HepG2 (cell line): ENCODE measurements at regions of chr1 and their contacts with region 1.

Region 1: GRCh38 chr1:109762821-109763645 is 690 bp downstream of the EPS8L3 start:
- DNase-seq: no peak
- ATAC-seq: peak; percentile 2; the same call in 2 of the 3 replicates
- H3K4me3 ChIP-seq: peak overlapping the region; percentile 76 to 88 (median 79)
- H3K27ac ChIP-seq: peak overlapping the region; percentile 74
- H3K4me1 ChIP-seq: peaks cover 80% of the 10 kb centered on the region
- H3K27me3 ChIP-seq: no peaks in the 10 kb centered on the region; a peak in 2 of 5 replicates
- CTCF ChIP-seq: no peak
- EP300 ChIP-seq: no peak
- POLR2A ChIP-seq: no peak
- RAD21 ChIP-seq: no peak

Region 2: DNA sequence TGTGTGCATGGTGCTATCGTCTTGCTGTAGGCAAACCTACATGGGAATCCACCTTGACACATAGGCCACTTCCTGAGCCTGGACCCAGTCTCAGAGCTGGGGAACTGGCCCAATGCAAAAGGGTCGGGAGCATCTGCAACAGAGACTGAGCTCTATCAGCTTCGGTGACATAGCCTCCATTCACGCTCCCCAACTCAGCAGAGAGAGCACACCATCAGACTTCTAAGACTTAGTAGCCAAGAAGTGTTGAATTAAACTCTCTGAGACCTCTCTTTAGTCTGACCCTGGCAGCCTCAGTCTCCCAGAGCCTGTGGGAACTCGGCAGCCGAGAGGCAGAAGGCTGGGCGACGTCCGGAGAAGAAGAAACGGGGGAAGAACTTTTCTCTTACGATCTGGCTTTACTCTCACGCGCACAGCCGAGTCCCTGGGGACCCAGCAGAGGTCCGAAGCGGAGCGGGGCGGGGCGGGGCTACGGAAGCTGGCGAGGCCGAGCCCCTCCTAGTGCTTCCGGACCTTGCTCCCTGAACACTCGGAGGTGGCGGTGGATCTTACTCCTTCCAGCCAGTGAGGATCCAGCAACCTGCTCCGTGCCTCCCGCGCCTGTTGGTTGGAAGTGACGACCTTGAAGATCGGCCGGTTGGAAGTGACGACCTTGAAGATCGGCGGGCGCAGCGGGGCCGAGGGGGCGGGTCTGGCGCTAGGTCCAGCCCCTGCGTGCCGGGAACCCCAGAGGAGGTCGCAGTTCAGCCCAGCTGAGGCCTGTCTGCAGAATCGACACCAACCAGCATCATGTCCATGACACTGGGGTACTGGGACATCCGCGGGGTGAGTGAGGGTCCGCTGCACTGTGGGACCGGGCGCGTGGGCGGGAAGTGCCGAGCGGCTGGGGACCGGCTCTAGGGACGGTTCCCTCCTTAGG is 107.2 kb before region 1 on chr1 and contains the start of gene GSTM4:
- CTCF ChIA-PET with region 1: no interaction called
- POLR2A ChIA-PET with region 1: interaction called, 11 read pairs
- in situ Hi-C with region 1: no loop called
- intact Hi-C with region 1: no loop called
- DNase-seq: peak; percentile 59
- ATAC-seq: peak; percentile 97
- H3K4me3 ChIP-seq: peak within 1 kb of the TSS; percentile 83 to 88 (median 86)
- H3K27ac ChIP-seq: peak within 1 kb of the TSS; percentile 59
- H3K4me1 ChIP-seq: peaks cover 35% of the 10 kb centered on the region
- H3K27me3 ChIP-seq: 0 out of 5 replicates have a peak, but pooled peaks cover 0 to 4% of the 10 kb centered on the region in 2 experiments
- CTCF ChIP-seq: peak; percentile 55; the same call in 1 of the 2 replicates
- EP300 ChIP-seq: no peak
- POLR2A ChIP-seq: peak in 1 of 2 experiments; percentile 85; a peak in 2 of 4 replicates
- RAD21 ChIP-seq: no peak
- total RNA-seq, gene GSTM4: 25.3 and 30.6 TPM in 2 replicates

Region 3: GRCh38 chr1:109739738-109740660 is 23.0 kb before region 1 on chr1:
- CTCF ChIA-PET with region 1: no interaction called
- POLR2A ChIA-PET with region 1: interaction called, 18 read pairs
- in situ Hi-C with region 1: no loop called
- intact Hi-C with region 1: no loop called
- DNase-seq: peak; percentile 49
- ATAC-seq: peak; percentile 93
- H3K4me3 ChIP-seq: peak overlapping the region; percentile 68 to 85 (median 77)
- H3K27ac ChIP-seq: peak overlapping the region; percentile 48
- H3K4me1 ChIP-seq: peaks cover 28% of the 10 kb centered on the region
- H3K27me3 ChIP-seq: no peaks in the 10 kb centered on the region
- CTCF ChIP-seq: peak; percentile 15; the same call in 1 of the 2 replicates
- EP300 ChIP-seq: no peak
- POLR2A ChIP-seq: peak; percentile 80 to 96
- RAD21 ChIP-seq: no peak

Region 4: GRCh38 chr1:109750241-109750882 is 12.7 kb before region 1 on chr1:
- CTCF ChIA-PET with region 1: no interaction called
- POLR2A ChIA-PET with region 1: interaction called, 10 read pairs
- in situ Hi-C with region 1: no loop called
- intact Hi-C with region 1: no loop called
- DNase-seq: no peak
- ATAC-seq: no peak; the same call in 1 of the 3 replicates
- H3K4me3 ChIP-seq: no peak overlapping the region
- H3K27ac ChIP-seq: no peak overlapping the region
- H3K4me1 ChIP-seq: no peaks in the 10 kb centered on the region
- H3K27me3 ChIP-seq: no peaks in the 10 kb centered on the region
- CTCF ChIP-seq: no peak
- EP300 ChIP-seq: no peak
- POLR2A ChIP-seq: no peak
- RAD21 ChIP-seq: no peak

Region 5: GRCh38 chr1:109783429-109783831 is 20.4 kb after region 1 on chr1:
- CTCF ChIA-PET with region 1: no interaction called
- POLR2A ChIA-PET with region 1: no interaction called
- in situ Hi-C with region 1: no loop called
- intact Hi-C with region 1: no loop called
- DNase-seq: no peak
- ATAC-seq: no peak
- H3K4me3 ChIP-seq: no peak overlapping the region
- H3K27ac ChIP-seq: no peak overlapping the region
- H3K4me1 ChIP-seq: peaks cover 14% of the 10 kb centered on the region
- H3K27me3 ChIP-seq: peaks cover 0 to 3% of the 10 kb centered on the region in 2 experiments; a peak in 3 of 5 replicates
- CTCF ChIP-seq: no peak
- EP300 ChIP-seq: no peak
- POLR2A ChIP-seq: no peak
- RAD21 ChIP-seq: no peak